ENCODE measurements at regions of chr5 and their contacts with region 1.

Region 1: DNA sequence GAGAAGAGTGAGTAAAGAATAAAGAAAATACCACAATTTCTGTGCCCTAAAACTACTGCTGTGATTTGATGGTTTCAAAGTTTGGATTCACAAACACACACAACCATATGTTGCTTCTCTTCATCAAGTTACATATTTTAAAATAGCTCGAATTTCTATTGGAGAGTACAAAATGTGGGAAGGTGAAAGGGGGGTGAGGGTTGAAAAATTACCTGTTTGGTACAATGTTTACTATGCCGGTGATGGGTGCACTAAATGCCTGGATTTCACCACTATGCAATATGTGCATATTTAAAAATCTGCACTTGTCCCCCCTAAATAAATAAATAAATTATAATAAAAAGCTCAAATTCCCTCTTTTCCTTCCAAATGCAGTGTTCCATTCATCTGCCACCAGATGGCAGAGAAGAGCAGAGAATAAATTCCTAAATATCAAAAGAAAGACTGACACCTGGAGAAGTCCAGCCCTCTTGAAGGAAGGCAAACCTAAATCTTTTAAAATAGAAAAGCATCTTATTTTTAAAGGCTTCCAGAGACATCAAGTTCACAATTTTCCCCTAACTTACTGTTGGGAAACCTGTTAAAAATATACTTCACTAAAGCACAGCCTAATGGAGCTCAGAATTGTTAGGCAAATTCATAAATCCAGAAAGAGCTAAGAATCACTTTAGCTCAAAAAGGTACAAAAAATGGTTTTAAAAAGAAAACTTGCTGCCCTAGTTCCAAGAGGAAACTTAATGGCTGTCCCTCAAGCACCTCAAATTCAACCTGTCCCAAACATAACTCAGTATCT is 24.8 kb upstream of the HNRNPA0 start:
- DNase-seq: peak; percentile 6 to 23 (median 16)
- H3K4me3 ChIP-seq: no peak overlapping the region
- H3K4me3 Mint-ChIP-seq: no peak overlapping the region
- H3K27ac ChIP-seq: no peak overlapping the region
- H3K27ac Mint-ChIP-seq: no peak overlapping the region
- H3K4me1 ChIP-seq: no peaks in the 10 kb centered on the region
- H3K4me1 Mint-ChIP-seq: no peaks in the 10 kb centered on the region
- H3K27me3 ChIP-seq: no peaks in the 10 kb centered on the region
- H3K27me3 Mint-ChIP-seq: peaks cover 0 to 3% (median 1%) of the 10 kb centered on the region in 3 donors
- CTCF ChIP-seq: peak; percentile 78

Region 2: DNA sequence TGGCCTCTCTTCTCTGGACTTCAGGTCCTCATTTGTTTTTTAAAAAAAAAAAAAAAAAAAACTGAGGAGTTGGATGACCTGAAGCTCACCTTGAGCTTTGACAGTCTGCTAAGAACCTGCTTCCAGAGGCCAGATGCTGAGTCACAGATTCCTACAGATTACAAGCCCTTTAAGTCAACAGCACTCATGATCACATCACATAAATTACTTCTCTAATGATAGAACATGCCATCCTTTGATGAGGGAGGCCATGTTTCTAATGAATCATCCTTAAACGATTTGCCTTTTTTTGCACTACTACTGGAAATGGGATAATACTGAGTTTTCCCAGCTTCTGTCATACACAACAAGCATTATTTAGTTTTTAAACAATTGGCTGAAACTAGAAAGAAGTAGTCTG is 54.5 kb after region 1 on chr5:
- intact Hi-C with region 1: no loop called
- DNase-seq: no peak
- H3K4me3 ChIP-seq: no peak overlapping the region
- H3K4me3 Mint-ChIP-seq: no peak overlapping the region
- H3K27ac ChIP-seq: no peak overlapping the region
- H3K27ac Mint-ChIP-seq: no peak overlapping the region
- H3K4me1 ChIP-seq: no peaks in the 10 kb centered on the region
- H3K4me1 Mint-ChIP-seq: no peaks in the 10 kb centered on the region
- H3K27me3 ChIP-seq: no peaks in the 10 kb centered on the region
- H3K27me3 Mint-ChIP-seq: no peaks in the 10 kb centered on the region
- CTCF ChIP-seq: no peak

Region 3: GRCh38 chr5:138065102-138065501 is 286.1 kb after region 1 on chr5:
- intact Hi-C with region 1: loop called in 1 of 2 experiments (anchors 10 kb)
- DNase-seq: no peak
- H3K4me3 ChIP-seq: no peak overlapping the region
- H3K4me3 Mint-ChIP-seq: no peak overlapping the region
- H3K27ac ChIP-seq: no peak overlapping the region
- H3K27ac Mint-ChIP-seq: no peak overlapping the region
- H3K4me1 ChIP-seq: peaks cover 10% of the 10 kb centered on the region in 2 donors
- H3K4me1 Mint-ChIP-seq: peaks cover 22% of the 10 kb centered on the region
- H3K27me3 ChIP-seq: no peaks in the 10 kb centered on the region
- H3K27me3 Mint-ChIP-seq: peaks cover 0 to 9% (median 3%) of the 10 kb centered on the region in 3 donors
- CTCF ChIP-seq: no peak

Region 4: GRCh38 chr5:138138949-138139780 is 360.2 kb after region 1 on chr5 and contains the start of gene NME5:
- intact Hi-C with region 1: loop called (anchors 10 kb)
- DNase-seq: peak in 1 of 3 donors; percentile 7
- H3K4me3 ChIP-seq: no peak within 1 kb of the TSS
- H3K4me3 Mint-ChIP-seq: peak within 1 kb of the TSS; percentile 6 to 79
- H3K27ac ChIP-seq: no peak within 1 kb of the TSS
- H3K27ac Mint-ChIP-seq: no peak within 1 kb of the TSS
- H3K4me1 ChIP-seq: peaks cover 9 to 11% of the 10 kb centered on the region in 2 donors
- H3K4me1 Mint-ChIP-seq: peaks cover 12% of the 10 kb centered on the region
- H3K27me3 ChIP-seq: peaks cover 34 to 47% of the 10 kb centered on the region in 2 donors
- H3K27me3 Mint-ChIP-seq: peaks cover 38 to 56% (median 49%) of the 10 kb centered on the region in 3 donors
- CTCF ChIP-seq: no peak
- polyA plus RNA-seq, gene NME5: not detected